GM10248 (cell line): ENCODE measurements at regions of chr1 and their contacts with region 1.

Region 1: DNA sequence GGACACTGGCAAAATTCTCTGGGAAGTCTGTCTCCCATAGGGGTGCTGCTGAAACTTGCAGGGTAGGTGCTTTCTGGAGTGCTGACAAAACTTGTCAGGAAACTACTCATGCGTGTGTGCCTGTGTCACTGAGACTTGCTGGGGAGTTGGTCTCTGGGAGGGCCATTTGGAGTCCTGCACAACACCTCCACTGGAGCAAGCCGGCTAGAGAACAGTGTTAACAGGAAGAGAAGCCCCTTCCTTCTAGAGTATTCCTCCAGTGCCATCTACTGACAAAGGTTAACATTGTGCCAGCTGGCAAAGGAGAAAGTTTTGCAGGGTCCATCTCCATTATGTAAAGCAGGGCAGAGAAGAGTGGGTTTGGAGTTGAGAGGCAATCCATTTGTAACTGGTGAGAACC is 30.0 kb downstream of the ZMYM4 start:
- DNase-seq: peak; percentile 50
- CTCF ChIP-seq: peak; percentile 46

Region 2: DNA sequence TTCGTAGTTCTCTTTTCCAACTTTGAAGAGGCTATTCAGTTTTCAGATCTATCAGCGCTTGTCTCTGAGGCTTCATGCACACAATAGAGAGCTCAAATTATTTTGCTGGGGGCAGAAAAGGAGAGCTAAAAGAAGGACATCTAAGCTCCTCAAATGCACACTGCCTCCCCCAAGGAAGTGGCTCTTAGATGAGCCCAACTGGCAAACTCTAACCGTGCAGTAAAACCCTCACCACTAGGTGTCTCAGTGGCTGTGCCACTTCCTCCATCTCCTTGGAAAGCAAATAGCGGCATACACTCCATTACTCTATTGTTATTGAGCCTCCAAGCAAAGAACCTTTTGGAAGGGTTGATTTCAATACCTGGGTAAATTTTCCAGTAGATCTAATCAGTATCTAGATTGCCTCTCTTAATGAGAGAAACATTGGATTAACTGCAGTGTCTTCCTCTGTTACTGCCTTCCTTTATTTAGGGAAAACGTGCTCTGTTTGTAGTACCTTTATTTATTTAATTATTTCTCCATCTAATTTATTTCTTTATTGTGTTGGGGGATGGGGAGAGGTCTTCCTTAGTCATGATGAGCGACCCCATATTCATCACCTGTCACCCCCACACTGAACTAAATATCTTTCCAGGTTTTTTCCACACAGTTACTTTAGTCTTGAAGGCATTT is 96.3 kb before region 1 on chr1:
- CTCF ChIA-PET with region 1: interaction called, 11 read pairs
- POLR2A ChIA-PET with region 1: no interaction called
- DNase-seq: peak; percentile 72
- CTCF ChIP-seq: peak; percentile 92

Region 3: GRCh38 chr1:35278886-35279554 is 19.4 kb before region 1 on chr1:
- CTCF ChIA-PET with region 1: no interaction called
- POLR2A ChIA-PET with region 1: no interaction called
- DNase-seq: no peak
- CTCF ChIP-seq: no peak